AG04450 (cell line): ENCODE measurements at regions of chr19 and their contacts with region 1.

Region 1: GRCh38 chr19:8580710-8581281 is 3.6 kb upstream of the MYO1F start:
- DNase-seq: no peak
- H3K4me3 ChIP-seq: no peak overlapping the region
- H3K27ac ChIP-seq: no peak overlapping the region
- H3K27me3 ChIP-seq: peaks cover 4% of the 10 kb centered on the region
- CTCF ChIP-seq: peak; percentile 98

Region 2: DNA sequence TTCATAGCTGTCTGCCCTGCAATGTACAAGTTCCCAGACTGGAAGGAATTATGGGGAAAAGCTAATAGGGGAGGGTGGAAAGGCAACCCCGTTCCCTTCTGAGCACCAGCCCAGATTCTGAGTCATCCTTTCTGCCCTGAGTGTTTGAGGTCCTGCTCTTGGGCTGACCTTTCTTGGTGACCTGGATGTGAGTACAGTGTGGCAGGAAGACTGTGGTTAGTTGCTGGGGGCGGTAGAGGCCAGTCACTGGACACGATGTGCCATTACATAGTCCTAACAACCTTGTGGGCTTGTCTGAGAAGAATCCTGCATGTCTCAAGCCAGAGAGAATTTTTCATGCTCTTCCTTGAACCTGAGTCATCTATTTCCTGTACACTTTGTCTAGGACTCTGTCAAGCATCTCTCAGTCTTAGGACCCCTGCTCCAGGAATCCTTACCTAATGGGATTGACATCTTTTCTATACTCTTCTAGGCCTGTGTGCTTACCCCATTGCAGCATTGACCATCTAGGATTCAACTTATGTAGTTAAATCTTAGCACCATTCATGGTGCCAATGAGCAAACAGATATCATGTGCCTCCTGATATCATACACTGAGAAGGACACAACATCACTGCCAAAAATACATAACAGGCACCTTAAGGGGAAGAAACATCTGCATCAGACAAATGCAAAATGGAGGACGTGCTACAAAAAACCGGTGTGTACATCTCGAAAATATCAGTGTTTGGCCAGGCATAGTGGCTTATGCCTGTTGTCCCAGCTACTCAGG is 225.0 kb before region 1 on chr19:
- CTCF ChIA-PET with region 1: interaction called, 53 read pairs
- POLR2A ChIA-PET with region 1: no interaction called
- DNase-seq: no peak
- H3K4me3 ChIP-seq: no peak overlapping the region
- H3K27ac ChIP-seq: peak overlapping the region; percentile 34
- H3K27me3 ChIP-seq: no peaks in the 10 kb centered on the region
- CTCF ChIP-seq: no peak

Region 3: GRCh38 chr19:8513687-8514504 is 66.9 kb before region 1 on chr19 and contains the start of gene ZNF414:
- CTCF ChIA-PET with region 1: interaction called, 18 read pairs
- POLR2A ChIA-PET with region 1: interaction called, 11 read pairs
- DNase-seq: peak; percentile 92
- H3K4me3 ChIP-seq: peak within 1 kb of the TSS; percentile 76
- H3K27ac ChIP-seq: peak within 1 kb of the TSS; percentile 73
- H3K27me3 ChIP-seq: peaks cover 3% of the 10 kb centered on the region
- CTCF ChIP-seq: no peak
- polyA plus RNA-seq, gene ZNF414: 2.0 and 3.6 TPM in 2 replicates

Region 4: GRCh38 chr19:8557642-8558238 is 23.1 kb before region 1 on chr19:
- CTCF ChIA-PET with region 1: interaction called, 23 read pairs
- POLR2A ChIA-PET with region 1: interaction called, 4 read pairs
- DNase-seq: no peak
- H3K4me3 ChIP-seq: no peak overlapping the region
- H3K27ac ChIP-seq: no peak overlapping the region
- H3K27me3 ChIP-seq: peaks cover 3% of the 10 kb centered on the region
- CTCF ChIP-seq: no peak

Region 5: DNA sequence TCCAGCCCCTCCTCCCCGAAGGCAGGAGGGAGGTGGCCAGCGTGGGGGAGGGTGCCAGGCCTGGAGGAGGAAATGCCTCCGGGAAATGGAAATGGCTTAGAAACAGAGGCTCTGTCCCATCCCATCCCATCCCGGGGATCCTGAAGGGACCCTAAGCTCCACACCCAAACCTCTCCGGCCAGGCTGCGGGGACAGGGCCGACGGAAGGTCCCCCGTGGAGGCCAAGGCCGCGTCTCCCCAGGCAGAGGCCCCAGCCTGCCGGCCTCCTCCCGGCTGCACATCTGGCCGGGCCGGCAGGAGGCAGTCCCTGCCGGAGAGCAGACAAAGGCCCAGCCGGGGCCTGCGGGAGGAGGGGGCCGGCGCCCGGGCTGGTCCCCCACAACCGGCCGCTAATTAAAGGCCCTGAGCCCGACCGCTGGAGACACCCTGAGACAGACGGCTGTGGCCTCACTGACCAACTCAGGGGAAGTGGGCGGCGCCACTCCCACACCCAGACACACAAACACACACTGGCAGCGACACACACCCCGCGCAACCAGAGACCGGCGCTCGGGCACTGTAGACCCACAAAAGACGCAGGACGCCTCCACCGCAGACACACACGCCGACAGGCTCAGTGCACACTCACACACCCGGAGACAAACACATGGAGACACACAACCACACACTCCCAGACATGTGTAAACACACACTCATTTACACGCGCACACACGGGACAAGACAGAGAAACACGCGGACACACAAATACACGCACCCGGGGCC is 28.7 kb after region 1 on chr19:
- CTCF ChIA-PET with region 1: interaction called, 11 read pairs
- POLR2A ChIA-PET with region 1: no interaction called
- DNase-seq: no peak
- H3K4me3 ChIP-seq: peak overlapping the region; percentile 87
- H3K27ac ChIP-seq: peak overlapping the region; percentile 61
- H3K27me3 ChIP-seq: no peaks in the 10 kb centered on the region
- CTCF ChIP-seq: peak; percentile 44

Region 6: GRCh38 chr19:8654591-8655339 is 74.0 kb after region 1 on chr19:
- CTCF ChIA-PET with region 1: interaction called, 11 read pairs
- POLR2A ChIA-PET with region 1: interaction called, 5 read pairs
- DNase-seq: no peak
- H3K4me3 ChIP-seq: no peak overlapping the region; the same call in 1 of the 2 replicates
- H3K27ac ChIP-seq: no peak overlapping the region
- H3K27me3 ChIP-seq: no peaks in the 10 kb centered on the region
- CTCF ChIP-seq: peak; percentile 94